ENCODE measurements at regions of chr4 and their contacts with region 1.

Region 1: DNA sequence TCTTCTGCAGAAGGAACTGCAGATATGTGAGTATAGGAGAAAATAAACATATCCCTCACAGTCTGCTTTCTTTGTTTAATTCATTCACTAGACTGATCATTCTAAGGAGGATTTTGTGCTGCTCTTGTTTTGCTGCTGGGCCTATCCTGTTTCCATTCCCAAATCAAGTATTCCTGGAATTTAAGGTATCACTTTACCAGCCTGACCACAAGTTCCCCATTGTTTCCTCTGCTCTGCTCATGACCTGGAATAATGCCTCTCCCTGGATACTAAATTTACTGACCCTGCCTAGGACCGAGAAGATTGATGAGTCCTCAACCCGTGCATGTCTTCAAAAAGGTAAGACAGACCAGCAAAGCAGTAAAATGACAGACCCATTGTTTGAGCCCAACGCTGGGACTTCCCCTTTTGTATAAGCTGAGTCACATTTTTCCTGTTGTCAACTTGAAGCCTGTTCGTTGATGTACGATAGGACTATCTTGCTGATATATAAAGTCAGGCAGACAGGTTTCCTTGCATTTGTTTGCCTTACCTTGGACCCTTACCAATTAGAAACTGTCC is 85.5 kb upstream of the TET2 start:
- DNase-seq: peak; percentile 81
- H3K4me3 Mint-ChIP-seq: peak overlapping the region; percentile 70
- H3K27ac Mint-ChIP-seq: peak overlapping the region; percentile 94
- H3K4me1 Mint-ChIP-seq: peaks cover 35% of the 10 kb centered on the region
- H3K27me3 Mint-ChIP-seq: peaks cover 1% of the 10 kb centered on the region

Region 2: GRCh38 chr4:104879367-104879766 is 181.8 kb before region 1 on chr4:
- intact Hi-C with region 1: loop called (anchors 1 kb)
- DNase-seq: no peak
- H3K4me3 Mint-ChIP-seq: peak overlapping the region; percentile 32
- H3K27ac Mint-ChIP-seq: no peak overlapping the region
- H3K4me1 Mint-ChIP-seq: peaks cover 9% of the 10 kb centered on the region
- H3K27me3 Mint-ChIP-seq: peaks cover 11% of the 10 kb centered on the region

Region 3: GRCh38 chr4:105088110-105088879 is 27.1 kb after region 1 on chr4:
- intact Hi-C with region 1: no loop called
- DNase-seq: no peak
- H3K4me3 Mint-ChIP-seq: no peak overlapping the region
- H3K27ac Mint-ChIP-seq: no peak overlapping the region
- H3K4me1 Mint-ChIP-seq: no peaks in the 10 kb centered on the region
- H3K27me3 Mint-ChIP-seq: peaks cover 2% of the 10 kb centered on the region

Region 4: GRCh38 chr4:105135785-105136184 is 74.6 kb after region 1 on chr4:
- intact Hi-C with region 1: loop called (anchors 2 kb)
- DNase-seq: no peak
- H3K4me3 Mint-ChIP-seq: no peak overlapping the region
- H3K27ac Mint-ChIP-seq: no peak overlapping the region
- H3K4me1 Mint-ChIP-seq: peaks cover 2% of the 10 kb centered on the region
- H3K27me3 Mint-ChIP-seq: no peaks in the 10 kb centered on the region

Region 5: DNA sequence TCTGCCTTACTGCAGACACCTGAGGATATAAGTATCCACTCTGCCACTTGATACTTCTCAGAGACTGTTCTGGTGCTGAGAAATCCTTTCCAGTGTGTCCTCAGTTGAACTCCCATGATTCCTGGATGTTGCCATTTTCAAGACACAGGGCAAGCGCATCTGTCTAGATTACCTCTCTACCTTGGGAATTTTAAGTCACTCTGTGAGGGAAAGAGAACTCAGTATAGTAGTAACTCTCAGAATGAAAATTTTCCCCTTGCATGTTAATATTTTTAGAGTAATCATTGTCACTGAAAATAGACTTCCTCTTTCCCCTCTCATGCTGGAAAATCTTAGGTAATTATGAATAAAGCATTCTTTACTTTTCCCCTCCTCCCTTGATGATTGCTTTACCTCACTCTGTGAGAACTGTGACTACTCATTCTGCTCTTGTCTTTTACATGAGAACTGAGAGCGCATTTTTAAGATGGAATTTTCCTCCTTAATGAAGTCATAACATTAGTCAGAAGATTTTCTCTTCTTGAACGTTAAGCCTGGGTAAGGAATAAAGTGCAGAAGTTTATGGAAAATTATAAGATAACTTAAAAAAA is 130.5 kb after region 1 on chr4:
- intact Hi-C with region 1: loop called (anchors 2 kb)
- DNase-seq: no peak
- H3K4me3 Mint-ChIP-seq: peak overlapping the region; percentile 8
- H3K27ac Mint-ChIP-seq: peak overlapping the region; percentile 79
- H3K4me1 Mint-ChIP-seq: peaks cover 45% of the 10 kb centered on the region
- H3K27me3 Mint-ChIP-seq: no peaks in the 10 kb centered on the region

Measured in activated CD4-positive, alpha-beta T cell treated with anti-CD3 and anti-CD28 coated beads, Interleukin-2, amount 10 ng/mL, durations not matched to agents 24 days and 14 days (primary cell).